ENCODE measurements at regions of chr14 and their contacts with region 1.

Region 1: DNA sequence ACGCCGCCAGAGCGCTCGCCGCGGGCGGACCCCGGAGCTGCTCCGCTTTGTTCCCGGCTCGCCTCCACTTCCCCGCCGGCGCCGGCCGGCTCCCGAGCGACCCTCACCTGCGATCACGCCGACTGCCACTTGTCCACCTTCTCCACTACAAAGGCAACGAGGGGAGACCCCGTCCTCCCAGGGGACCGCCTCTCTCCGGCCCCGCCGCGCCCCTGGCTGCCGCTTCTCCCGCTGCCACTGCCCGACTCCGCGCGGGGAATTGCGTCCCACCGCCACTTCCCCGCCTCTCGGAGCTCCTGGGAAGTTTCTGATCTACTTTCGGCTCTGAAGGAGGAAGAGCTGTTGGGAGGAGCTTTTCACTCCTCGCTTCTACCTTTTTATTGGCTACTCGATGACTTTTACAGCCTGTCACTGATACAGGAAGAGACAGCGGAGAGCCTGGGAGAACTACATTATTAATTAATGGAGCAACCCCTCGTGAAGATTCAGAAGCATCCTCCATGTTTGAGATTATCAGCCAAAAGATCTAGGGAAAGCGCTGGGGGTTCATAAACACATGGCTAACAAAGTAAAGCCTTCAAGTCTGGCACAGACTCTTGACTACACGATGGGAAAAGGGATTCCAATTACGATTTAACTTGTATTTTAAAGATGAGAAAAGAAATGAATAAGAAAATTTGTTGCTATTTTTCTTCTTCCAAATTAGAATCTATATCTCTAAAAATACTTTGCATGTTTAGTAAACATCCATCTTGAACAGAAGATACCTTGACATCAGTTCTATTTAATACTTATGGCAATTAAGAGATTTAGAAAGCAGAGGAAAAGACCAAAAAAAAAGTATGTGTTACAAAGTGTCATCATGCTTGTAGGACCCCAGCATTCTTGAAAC is at the start of gene BAZ1A:
- DNase-seq: peak; percentile 85
- H3K4me3 Mint-ChIP-seq: peak within 1 kb of the TSS; percentile 100
- H3K27ac Mint-ChIP-seq: peak within 1 kb of the TSS; percentile 100
- H3K4me1 Mint-ChIP-seq: peaks cover 23% of the 10 kb centered on the region
- H3K27me3 Mint-ChIP-seq: no peaks in the 10 kb centered on the region
- total RNA-seq, gene BAZ1A: 89.7 TPM in 2 replicates

Region 2: DNA sequence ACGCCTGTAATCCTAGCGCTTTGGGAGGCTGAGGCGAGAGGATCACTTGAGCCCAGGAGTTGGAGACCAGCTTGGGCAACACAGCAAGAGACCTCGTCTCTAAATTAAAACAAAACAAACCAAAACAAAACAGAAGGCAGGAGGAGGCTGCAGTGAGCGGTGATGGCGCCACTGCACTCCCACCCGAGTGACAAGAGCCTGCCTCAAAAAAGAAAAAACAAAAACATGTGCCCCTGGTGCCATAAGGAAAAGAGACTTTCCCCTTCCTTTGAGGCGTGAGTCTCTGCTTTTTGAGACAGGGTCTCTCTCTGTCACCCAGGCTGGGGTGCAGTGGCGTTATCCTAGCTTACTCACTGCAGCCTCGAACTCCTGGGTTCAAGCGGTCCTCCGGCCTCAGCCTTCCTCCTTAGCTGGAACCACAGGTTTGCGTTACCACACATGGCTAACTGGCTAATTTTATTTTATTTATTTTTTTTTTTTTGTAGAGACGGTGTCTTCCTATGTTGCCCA is 326.8 kb before region 1 on chr14:
- intact Hi-C with region 1: no loop called
- DNase-seq: peak; percentile 68
- H3K4me3 Mint-ChIP-seq: no peak overlapping the region
- H3K27ac Mint-ChIP-seq: peak overlapping the region; percentile 51
- H3K4me1 Mint-ChIP-seq: peaks cover 10% of the 10 kb centered on the region
- H3K27me3 Mint-ChIP-seq: no peaks in the 10 kb centered on the region

Region 3: GRCh38 chr14:34714320-34715126 is 160.8 kb before region 1 on chr14 and contains the start of gene CFL2:
- intact Hi-C with region 1: loop called (anchors 1 kb)
- DNase-seq: peak; percentile 88
- H3K4me3 Mint-ChIP-seq: peak within 1 kb of the TSS; percentile 87
- H3K27ac Mint-ChIP-seq: peak within 1 kb of the TSS; percentile 86
- H3K4me1 Mint-ChIP-seq: peaks cover 21% of the 10 kb centered on the region
- H3K27me3 Mint-ChIP-seq: peaks cover 10% of the 10 kb centered on the region
- total RNA-seq, gene CFL2: 4.9 and 6.0 TPM in 2 replicates

Region 4: GRCh38 chr14:34733235-34733634 is 142.0 kb before region 1 on chr14:
- intact Hi-C with region 1: no loop called
- DNase-seq: no peak
- H3K4me3 Mint-ChIP-seq: no peak overlapping the region
- H3K27ac Mint-ChIP-seq: no peak overlapping the region
- H3K4me1 Mint-ChIP-seq: no peaks in the 10 kb centered on the region
- H3K27me3 Mint-ChIP-seq: peaks cover 18% of the 10 kb centered on the region

Region 5: DNA sequence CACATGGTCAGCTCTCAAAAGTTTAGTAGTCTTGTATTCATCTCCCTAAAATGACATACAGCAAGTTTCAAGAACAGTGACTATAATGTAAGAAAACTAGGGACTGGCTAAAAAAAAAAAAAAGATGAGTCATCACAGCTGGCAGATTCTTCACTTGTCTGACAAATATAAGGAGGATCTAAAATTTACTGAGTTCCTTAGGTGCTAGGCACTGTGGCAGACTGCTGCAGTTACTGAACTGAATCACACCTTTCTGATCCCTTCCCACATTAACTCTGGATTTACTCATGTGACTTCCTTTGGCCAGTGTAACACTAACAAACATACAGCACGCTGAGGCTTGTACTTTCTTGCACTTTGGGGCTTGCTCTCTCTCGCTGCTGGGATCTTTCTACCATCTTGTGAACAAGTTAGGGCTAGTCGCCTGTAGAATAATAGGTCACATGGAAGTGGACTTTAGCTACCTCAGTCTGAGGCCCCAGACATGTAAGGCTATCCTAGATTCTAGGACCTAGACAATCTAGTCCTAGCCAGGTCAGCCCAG is 32.2 kb before region 1 on chr14:
- intact Hi-C with region 1: loop called (anchors 1 kb)
- DNase-seq: peak; percentile 59
- H3K4me3 Mint-ChIP-seq: peak overlapping the region; percentile 15
- H3K27ac Mint-ChIP-seq: peak overlapping the region; percentile 69
- H3K4me1 Mint-ChIP-seq: peaks cover 9% of the 10 kb centered on the region
- H3K27me3 Mint-ChIP-seq: no peaks in the 10 kb centered on the region

Region 6: DNA sequence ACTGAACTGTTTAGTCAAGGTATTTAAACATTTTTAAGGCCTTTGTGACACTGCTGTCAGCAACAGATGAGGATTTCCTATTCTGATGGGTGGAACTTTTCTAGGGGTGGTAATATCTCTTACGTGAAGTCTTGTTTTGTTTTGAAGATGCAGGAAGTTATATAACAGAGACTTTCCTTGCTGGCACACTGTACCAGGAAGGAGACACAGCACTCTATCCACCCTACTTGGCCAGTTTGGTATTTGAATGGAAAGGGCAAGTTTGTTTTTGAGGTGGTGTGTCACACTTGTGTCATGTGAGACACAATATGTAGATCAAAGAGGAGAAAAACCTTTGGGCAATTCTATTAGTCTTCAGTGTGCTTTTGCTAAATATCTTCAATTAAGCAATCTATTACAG is 55.9 kb after region 1 on chr14:
- intact Hi-C with region 1: loop called (anchors 2 kb)
- DNase-seq: peak; percentile 80
- H3K4me3 Mint-ChIP-seq: peak overlapping the region; percentile 64
- H3K27ac Mint-ChIP-seq: peak overlapping the region; percentile 87
- H3K4me1 Mint-ChIP-seq: peaks cover 28% of the 10 kb centered on the region
- H3K27me3 Mint-ChIP-seq: no peaks in the 10 kb centered on the region

Region 7: GRCh38 chr14:35046048-35046741 is 170.9 kb after region 1 on chr14 and contains the start of gene FAM177A1:
- intact Hi-C with region 1: loop called (anchors 1 kb)
- DNase-seq: peak; percentile 99
- H3K4me3 Mint-ChIP-seq: peak within 1 kb of the TSS; percentile 96
- H3K27ac Mint-ChIP-seq: peak within 1 kb of the TSS; percentile 99
- H3K4me1 Mint-ChIP-seq: peaks cover 28% of the 10 kb centered on the region
- H3K27me3 Mint-ChIP-seq: no peaks in the 10 kb centered on the region
- total RNA-seq, gene FAM177A1: 37.9 and 41.6 TPM in 2 replicates

Region 8: GRCh38 chr14:35079742-35080141 is 204.5 kb after region 1 on chr14:
- intact Hi-C with region 1: no loop called
- DNase-seq: no peak
- H3K4me3 Mint-ChIP-seq: no peak overlapping the region
- H3K27ac Mint-ChIP-seq: no peak overlapping the region
- H3K4me1 Mint-ChIP-seq: no peaks in the 10 kb centered on the region
- H3K27me3 Mint-ChIP-seq: no peaks in the 10 kb centered on the region

Region 9: DNA sequence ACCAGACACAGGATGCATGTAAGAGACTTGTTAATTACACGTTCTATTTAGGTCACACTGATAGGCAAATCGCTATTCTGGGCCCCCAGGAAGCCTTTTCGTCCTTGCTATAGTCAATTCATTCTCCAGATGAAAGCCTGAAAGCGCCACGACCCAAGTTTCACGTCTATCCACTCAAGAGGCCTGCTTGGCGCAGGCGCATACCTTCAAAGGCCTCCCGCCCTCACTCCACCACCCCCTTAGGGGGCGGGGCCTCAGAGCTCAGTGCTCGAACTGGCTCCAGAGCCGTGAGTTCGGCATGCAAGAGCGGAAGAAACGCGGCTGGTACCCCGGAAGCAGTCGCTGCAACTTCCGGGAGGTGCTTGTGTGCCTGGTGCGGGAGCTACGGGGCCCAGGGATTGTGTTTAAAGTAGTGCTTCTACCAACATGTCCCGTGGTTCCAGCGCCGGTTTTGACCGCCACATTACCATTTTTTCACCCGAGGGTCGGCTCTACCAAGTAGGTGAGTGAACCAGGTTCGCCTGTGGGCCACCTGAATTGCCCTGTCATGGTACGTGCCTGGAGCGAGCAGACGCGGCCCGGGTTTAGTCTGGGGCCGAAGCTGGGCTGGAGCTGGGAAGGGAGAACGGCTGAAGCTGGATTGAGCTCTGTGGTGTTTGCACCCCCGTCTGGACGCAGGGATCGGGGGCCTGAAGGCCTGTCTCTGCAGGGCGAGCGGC is 416.9 kb after region 1 on chr14 and contains the start of gene PSMA6:
- intact Hi-C with region 1: loop called (anchors 10 kb)
- DNase-seq: peak; percentile 100
- H3K4me3 Mint-ChIP-seq: peak within 1 kb of the TSS; percentile 100
- H3K27ac Mint-ChIP-seq: peak within 1 kb of the TSS; percentile 98
- H3K4me1 Mint-ChIP-seq: peaks cover 49% of the 10 kb centered on the region
- H3K27me3 Mint-ChIP-seq: no peaks in the 10 kb centered on the region
- total RNA-seq, gene PSMA6: 501 and 522 TPM in 2 replicates

Region 10: DNA sequence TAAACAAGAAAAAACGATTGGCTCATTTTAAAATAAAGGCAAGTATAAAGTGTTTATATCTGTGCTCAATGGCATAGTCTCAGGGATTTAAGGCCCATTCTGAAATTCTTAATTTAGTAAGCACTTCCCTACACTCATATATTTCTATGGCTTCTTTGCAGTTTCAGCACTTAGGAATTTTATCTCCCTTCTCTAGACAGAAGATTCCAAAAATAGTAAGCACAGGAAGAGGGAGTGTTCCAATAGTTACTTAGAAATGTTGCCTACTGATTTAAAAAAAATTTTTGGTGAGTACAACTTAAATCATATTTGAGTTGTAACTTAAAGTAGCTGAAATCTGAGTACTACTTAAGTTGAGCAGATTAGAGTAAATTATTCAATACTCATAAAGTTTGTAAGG is 678.5 kb after region 1 on chr14:
- intact Hi-C with region 1: no loop called
- DNase-seq: no peak
- H3K4me3 Mint-ChIP-seq: no peak overlapping the region
- H3K27ac Mint-ChIP-seq: no peak overlapping the region
- H3K4me1 Mint-ChIP-seq: no peaks in the 10 kb centered on the region
- H3K27me3 Mint-ChIP-seq: no peaks in the 10 kb centered on the region

Measured in activated CD4-positive, alpha-beta T cell treated with anti-CD3 and anti-CD28 coated beads, Interleukin-2, amount 10 ng/mL, durations not matched to agents 24 days and 14 days (primary cell).